Mammary epithelial cell (primary cell): ENCODE measurements at regions of chr14 and their contacts with region 1.

Region 1: DNA sequence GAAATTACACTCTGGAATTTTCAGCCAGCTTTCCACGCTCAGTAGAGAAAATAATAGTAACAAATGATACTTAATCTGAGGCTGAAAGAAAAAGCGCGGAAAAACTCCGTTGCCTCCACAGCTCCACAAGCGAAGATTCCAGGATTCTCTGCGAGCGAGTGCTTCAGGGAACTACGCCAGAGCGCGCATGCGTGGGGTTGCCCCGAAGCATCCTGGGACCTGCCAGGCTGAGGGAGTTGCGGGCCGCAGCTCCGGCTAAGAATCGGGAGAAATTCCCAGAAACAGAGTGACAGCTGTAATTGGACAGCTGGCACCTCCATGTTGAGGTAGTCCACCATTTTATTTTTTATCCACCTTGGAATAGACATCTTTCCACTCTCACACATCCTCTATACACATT is 12.0 kb upstream of the TTC5 start:
- DNase-seq: no peak
- H3K4me3 ChIP-seq: no peak overlapping the region
- H3K27ac ChIP-seq: no peak overlapping the region
- H3K4me1 ChIP-seq: no peaks in the 10 kb centered on the region
- H3K27me3 ChIP-seq: no peaks in the 10 kb centered on the region
- CTCF ChIP-seq: no peak

Region 2: GRCh38 chr14:20350860-20351259 is 33.1 kb after region 1 on chr14:
- CTCF ChIA-PET with region 1: no interaction called
- dilution Hi-C with region 1: loop called (anchors 5 kb)
- in situ Hi-C with region 1: no loop called
- intact Hi-C with region 1: no loop called
- DNase-seq: no peak
- H3K4me3 ChIP-seq: no peak overlapping the region
- H3K27ac ChIP-seq: no peak overlapping the region
- H3K4me1 ChIP-seq: no peaks in the 10 kb centered on the region
- H3K27me3 ChIP-seq: no peaks in the 10 kb centered on the region
- CTCF ChIP-seq: peak in 1 of 2 donors; percentile 29

Region 3: DNA sequence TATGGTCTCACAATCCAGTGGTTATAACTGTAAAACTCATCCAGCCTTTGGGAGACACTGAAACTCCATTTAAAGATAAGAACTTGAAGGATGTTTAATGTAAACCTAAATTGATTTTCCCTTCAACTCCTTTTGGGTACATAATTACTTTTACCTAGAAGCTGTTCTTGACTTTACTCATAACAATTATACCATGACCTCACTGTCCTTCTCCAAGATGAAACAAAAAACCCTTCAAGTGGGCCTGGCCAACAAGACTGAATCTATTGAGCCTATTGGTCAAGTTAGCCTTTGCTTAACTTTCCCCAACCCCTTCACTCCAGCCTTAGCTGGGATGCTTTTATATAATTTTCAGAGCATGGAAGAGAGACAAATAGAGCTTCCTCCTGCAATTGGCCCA is 48.2 kb after region 1 on chr14:
- CTCF ChIA-PET with region 1: no interaction called
- dilution Hi-C with region 1: no loop called
- in situ Hi-C with region 1: no loop called
- intact Hi-C with region 1: no loop called
- DNase-seq: no peak
- H3K4me3 ChIP-seq: no peak overlapping the region
- H3K27ac ChIP-seq: no peak overlapping the region
- H3K4me1 ChIP-seq: no peaks in the 10 kb centered on the region
- H3K27me3 ChIP-seq: no peaks in the 10 kb centered on the region
- CTCF ChIP-seq: no peak